ENCODE measurements at regions of chr17 and their contacts with region 1.

Region 1: GRCh38 chr17:75412455-75413317 is 7.2 kb upstream of the GRB2 start:
- DNase-seq: peak; percentile 75 to 86
- ATAC-seq: peak; percentile 87 to 89
- H3K4me3 ChIP-seq: peak overlapping the region; percentile 7; the same call in 2 of the 3 replicates
- H3K27ac ChIP-seq: peak overlapping the region in 1 of 2 experiments; percentile 35; a peak in 1 of 6 replicates
- H3K4me1 ChIP-seq: no peaks in the 10 kb centered on the region
- CTCF ChIP-seq: peak; percentile 95
- EP300 ChIP-seq: no peak
- POLR2A ChIP-seq: no peak
- RAD21 ChIP-seq: peak; percentile 91 to 95

Region 2: DNA sequence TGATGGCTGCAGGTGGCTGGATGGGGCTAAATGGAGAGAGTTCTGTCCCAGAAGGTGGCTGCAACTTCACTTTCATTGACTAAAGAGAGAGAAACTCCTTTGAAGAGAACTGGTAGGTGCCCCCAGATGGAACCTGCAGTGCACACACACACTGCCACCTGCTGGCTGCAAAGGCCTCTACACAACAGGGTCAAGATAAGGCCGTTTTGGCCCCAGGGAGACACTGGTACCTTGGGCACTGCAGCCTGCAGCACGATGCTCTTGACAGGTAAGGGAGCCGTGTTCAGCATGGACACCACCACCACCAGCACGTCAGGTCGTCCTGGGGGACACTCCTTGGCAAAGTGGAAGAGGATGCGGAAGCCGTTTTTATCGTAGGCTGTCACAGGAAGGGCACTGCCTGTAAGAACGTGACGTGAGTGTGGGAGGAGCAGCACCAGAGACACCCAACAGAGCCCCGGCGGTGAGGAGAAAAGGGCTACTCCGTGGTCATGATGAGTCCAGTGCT is 173.9 kb before region 1 on chr17:
- CTCF ChIA-PET with region 1: interaction called, 20 read pairs
- POLR2A ChIA-PET with region 1: no interaction called
- DNase-seq: peak; percentile 89 to 96
- ATAC-seq: peak; percentile 71 to 84
- H3K4me3 ChIP-seq: no peak overlapping the region
- H3K27ac ChIP-seq: no peak overlapping the region
- H3K4me1 ChIP-seq: 0 out of 3 replicates have a peak, but pooled peaks cover 6% of the 10 kb centered on the region
- CTCF ChIP-seq: peak; percentile 92
- EP300 ChIP-seq: no peak
- POLR2A ChIP-seq: no peak
- RAD21 ChIP-seq: peak; percentile 57 to 64

Region 3: GRCh38 chr17:75289115-75289831 is 123.4 kb before region 1 on chr17 and contains the start of gene SLC25A19:
- CTCF ChIA-PET with region 1: interaction called, 12 read pairs
- POLR2A ChIA-PET with region 1: no interaction called
- DNase-seq: peak; percentile 100
- ATAC-seq: peak; percentile 97 to 99
- H3K4me3 ChIP-seq: peak within 1 kb of the TSS; percentile 72
- H3K27ac ChIP-seq: peak within 1 kb of the TSS; percentile 86 to 90
- H3K4me1 ChIP-seq: peaks cover 12% of the 10 kb centered on the region
- CTCF ChIP-seq: no peak
- EP300 ChIP-seq: no peak
- POLR2A ChIP-seq: peak; percentile 95
- RAD21 ChIP-seq: peak; percentile 15 to 22; a peak in 2 of 5 replicates
- polyA plus RNA-seq, gene SLC25A19: 14.8 and 15.3 TPM in 2 replicates

Region 4: GRCh38 chr17:75301502-75302206 is 111.0 kb before region 1 on chr17:
- CTCF ChIA-PET with region 1: interaction called, 11 read pairs
- POLR2A ChIA-PET with region 1: no interaction called
- DNase-seq: no peak
- ATAC-seq: no peak; a peak in 1 of 6 replicates
- H3K4me3 ChIP-seq: no peak overlapping the region
- H3K27ac ChIP-seq: no peak overlapping the region
- H3K4me1 ChIP-seq: no peaks in the 10 kb centered on the region
- CTCF ChIP-seq: no peak
- EP300 ChIP-seq: no peak
- POLR2A ChIP-seq: no peak
- RAD21 ChIP-seq: no peak

Region 5: DNA sequence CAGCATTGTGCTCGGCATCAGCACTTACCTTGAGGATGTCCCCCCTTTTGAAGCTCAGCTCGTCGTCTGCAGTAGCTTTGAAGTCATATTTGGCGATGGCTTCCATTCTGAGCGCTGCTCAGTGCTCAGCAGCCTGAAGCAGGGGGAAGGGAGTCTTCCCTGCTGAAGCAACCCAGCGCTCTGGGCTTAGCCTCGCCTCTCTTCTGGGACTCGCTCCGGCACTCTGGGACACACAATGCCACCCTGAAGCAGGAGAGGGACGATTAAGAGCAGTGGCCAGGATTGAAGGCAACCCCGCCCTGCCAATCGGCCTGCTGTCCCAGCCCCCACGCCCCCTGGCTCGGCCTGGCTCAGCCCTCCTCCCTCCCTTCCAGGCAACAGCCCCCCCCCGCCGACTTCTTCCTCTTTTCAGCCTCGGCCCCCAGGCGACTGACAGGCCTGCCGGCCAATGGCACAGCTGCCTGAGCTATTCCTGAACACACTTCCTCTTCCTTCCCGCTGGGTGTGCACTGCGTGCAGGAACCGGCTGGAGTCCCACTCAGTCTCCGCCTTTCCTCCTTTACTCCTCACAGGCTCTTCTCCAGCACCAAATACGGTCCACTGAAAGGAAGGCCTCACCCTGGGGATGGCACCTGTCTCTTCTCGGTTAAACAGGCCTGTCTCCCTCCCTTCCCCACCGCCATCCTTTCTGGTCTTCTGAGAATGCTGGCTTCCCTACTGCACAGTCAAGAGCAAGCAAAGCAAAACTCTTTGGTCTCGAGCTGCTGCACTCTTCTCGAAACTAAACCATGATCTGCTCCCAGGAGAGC is 19.0 kb before region 1 on chr17:
- CTCF ChIA-PET with region 1: interaction called, 17 read pairs
- POLR2A ChIA-PET with region 1: no interaction called
- DNase-seq: peak; percentile 98 to 99
- ATAC-seq: peak; percentile 99 to 100
- H3K4me3 ChIP-seq: peak overlapping the region; percentile 62
- H3K27ac ChIP-seq: peak overlapping the region; percentile 80 to 88
- H3K4me1 ChIP-seq: peaks cover 30% of the 10 kb centered on the region
- CTCF ChIP-seq: no peak
- EP300 ChIP-seq: no peak
- POLR2A ChIP-seq: peak; percentile 79
- RAD21 ChIP-seq: 0 out of 5 replicates have a peak, but pooled peaks of 1 of the 2 experiments have one; percentile 17

Region 6: DNA sequence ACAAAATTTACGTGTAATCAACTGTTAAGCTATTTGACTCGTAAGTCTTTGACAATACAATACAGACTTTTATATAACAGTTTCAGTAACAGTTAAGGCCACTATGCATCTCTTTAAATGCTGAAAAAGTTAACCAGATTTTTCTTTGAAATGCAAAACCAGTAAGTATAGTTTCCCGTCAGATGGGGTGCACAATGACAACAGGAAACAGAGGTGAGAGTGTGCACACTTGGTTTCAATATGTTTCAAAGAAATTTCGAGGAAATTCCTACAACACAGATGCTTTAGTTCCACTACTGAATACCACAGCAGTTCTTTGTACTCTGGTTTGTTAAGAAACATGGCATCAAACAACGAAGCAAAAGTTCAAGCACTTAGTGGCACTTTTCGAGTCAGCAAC is 779.2 kb after region 1 on chr17:
- CTCF ChIA-PET with region 1: no interaction called
- POLR2A ChIA-PET with region 1: no interaction called
- DNase-seq: no peak
- ATAC-seq: no peak
- H3K4me3 ChIP-seq: no peak overlapping the region
- H3K27ac ChIP-seq: no peak overlapping the region
- H3K4me1 ChIP-seq: no peaks in the 10 kb centered on the region
- CTCF ChIP-seq: no peak
- EP300 ChIP-seq: no peak
- POLR2A ChIP-seq: no peak
- RAD21 ChIP-seq: no peak

Measured in A549 (cell line).